SK-N-SH (cell line): ENCODE measurements at regions of chr20 and their contacts with region 1.

Region 1: GRCh38 chr20:64119681-64120341 is 12.4 kb upstream of the NPBWR2 start:
- DNase-seq: peak; percentile 24
- H3K4me3 ChIP-seq: no peak overlapping the region
- H3K27ac ChIP-seq: no peak overlapping the region
- H3K4me1 ChIP-seq: no peaks in the 10 kb centered on the region; a peak in 1 of 4 replicates
- H3K27me3 ChIP-seq: peaks cover 28% of the 10 kb centered on the region
- CTCF ChIP-seq: no peak
- EP300 ChIP-seq: no peak
- RAD21 ChIP-seq: no peak

Region 2: GRCh38 chr20:63963348-63964301 is 156.2 kb before region 1 on chr20:
- CTCF ChIA-PET with region 1: no interaction called
- POLR2A ChIA-PET with region 1: no interaction called
- DNase-seq: no peak
- H3K4me3 ChIP-seq: no peak overlapping the region
- H3K27ac ChIP-seq: no peak overlapping the region
- H3K4me1 ChIP-seq: peaks cover 5 to 7% of the 10 kb centered on the region in 2 experiments; a peak in 2 of 4 replicates
- H3K27me3 ChIP-seq: no peaks in the 10 kb centered on the region
- CTCF ChIP-seq: no peak
- EP300 ChIP-seq: no peak
- RAD21 ChIP-seq: no peak

Region 3: DNA sequence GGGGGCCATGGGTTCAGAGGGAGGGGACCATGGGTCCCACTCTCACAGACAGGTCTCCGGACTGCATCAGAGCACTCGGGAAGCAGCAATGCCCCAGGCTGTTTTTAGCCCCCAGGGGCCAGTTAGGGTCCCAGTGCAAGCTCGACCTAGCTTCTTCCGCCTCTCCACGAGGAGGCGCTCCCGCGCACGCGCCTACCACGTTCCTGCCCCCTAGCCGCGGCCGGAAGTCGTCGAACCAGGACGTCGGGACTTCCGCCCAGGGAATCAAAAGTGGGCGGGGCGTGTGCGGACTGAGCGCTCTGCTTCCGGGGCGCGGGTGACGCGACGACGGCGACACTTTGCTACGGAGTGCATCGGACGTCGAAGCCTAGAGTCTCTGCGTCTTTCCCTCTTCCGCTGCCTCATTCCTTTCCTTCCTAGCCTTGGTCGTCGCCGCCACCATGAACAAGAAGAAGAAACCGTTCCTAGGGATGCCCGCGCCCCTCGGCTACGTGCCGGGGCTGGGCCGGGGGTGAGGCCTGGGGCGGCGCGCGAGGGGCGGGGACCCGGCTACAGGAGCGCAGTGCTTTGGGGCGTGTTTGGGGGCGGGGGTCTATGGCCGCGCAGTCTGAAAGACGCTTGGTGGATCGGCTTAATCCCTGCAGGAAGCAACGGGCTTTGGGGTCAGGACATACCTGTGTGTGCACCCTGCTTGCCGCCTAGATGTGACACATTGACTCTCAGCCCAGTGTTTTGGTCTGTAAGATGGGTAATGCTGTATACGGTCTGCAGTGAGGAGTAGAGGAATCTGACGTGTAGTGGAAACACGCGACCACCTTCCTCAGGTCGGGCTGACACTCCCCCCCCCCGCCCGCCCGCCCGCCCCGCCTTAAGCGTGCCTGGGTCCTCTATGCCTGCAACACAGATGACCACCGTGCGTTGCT is 138.7 kb before region 1 on chr20 and contains the start of gene PRPF6:
- CTCF ChIA-PET with region 1: interaction called, 11 read pairs
- POLR2A ChIA-PET with region 1: no interaction called
- DNase-seq: peak; percentile 98
- H3K4me3 ChIP-seq: peak within 1 kb of the TSS; percentile 77 to 98
- H3K27ac ChIP-seq: peak within 1 kb of the TSS; percentile 89 to 90
- H3K4me1 ChIP-seq: peaks cover 12 to 24% of the 10 kb centered on the region in 2 experiments
- H3K27me3 ChIP-seq: no peaks in the 10 kb centered on the region
- CTCF ChIP-seq: peak; percentile 81
- EP300 ChIP-seq: 0 out of 4 replicates have a peak, but pooled peaks of 1 of the 2 experiments have one; percentile 8
- RAD21 ChIP-seq: no peak; the same call in 1 of the 2 replicates
- polyA plus RNA-seq, gene PRPF6: 50.1 and 59.1 TPM in 2 replicates

Region 4: DNA sequence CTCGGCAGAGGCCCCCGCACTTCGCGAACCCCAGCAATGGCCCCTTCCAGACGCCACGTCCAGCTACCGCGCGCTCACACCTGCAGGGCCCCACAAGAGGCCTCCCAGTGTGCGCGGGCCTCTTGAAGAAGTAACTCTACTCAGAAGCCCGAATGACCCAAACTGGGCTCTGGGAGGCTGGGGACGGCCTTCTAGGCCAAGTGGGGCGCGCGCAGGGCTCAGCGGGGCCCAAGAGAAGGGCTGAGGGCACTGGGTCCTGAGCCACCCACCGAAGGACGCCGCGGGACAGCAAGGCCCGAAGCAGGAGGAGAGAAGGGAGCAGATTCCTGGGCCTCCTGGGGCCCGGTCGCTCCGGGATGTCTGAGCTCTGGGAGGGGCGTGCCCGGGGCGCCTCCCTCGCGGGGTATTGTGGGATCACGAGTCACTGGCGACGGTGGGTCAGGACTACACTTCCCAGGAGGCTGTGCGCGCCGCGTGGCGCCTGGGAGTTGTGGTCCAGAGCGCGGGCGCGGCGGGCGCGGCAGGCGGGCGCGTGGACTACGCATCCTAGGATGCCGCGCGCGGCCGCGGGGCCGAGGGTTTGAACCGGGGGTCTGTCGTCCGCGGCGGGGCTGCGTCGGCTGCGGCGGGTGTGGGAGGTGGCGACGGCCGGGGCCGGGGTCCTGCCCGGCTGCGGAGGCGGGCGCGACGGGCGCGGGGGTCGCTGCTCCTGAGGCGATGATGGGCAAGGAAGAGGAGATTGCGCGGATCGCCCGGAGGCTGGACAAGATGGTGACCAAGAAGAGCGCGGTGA is 57.0 kb before region 1 on chr20 and contains the start of gene TCEA2:
- CTCF ChIA-PET with region 1: interaction called, 12 read pairs
- POLR2A ChIA-PET with region 1: no interaction called
- DNase-seq: peak; percentile 99
- H3K4me3 ChIP-seq: peak within 1 kb of the TSS; percentile 91 to 93
- H3K27ac ChIP-seq: peak within 1 kb of the TSS; percentile 64 to 83
- H3K4me1 ChIP-seq: peaks cover 14 to 17% of the 10 kb centered on the region in 2 experiments; a peak in 2 of 4 replicates
- H3K27me3 ChIP-seq: no peaks in the 10 kb centered on the region
- CTCF ChIP-seq: no peak
- EP300 ChIP-seq: no peak; a peak in 1 of 4 replicates
- RAD21 ChIP-seq: no peak
- polyA plus RNA-seq, gene TCEA2: 53.5 and 98.9 TPM in 2 replicates

Region 5: DNA sequence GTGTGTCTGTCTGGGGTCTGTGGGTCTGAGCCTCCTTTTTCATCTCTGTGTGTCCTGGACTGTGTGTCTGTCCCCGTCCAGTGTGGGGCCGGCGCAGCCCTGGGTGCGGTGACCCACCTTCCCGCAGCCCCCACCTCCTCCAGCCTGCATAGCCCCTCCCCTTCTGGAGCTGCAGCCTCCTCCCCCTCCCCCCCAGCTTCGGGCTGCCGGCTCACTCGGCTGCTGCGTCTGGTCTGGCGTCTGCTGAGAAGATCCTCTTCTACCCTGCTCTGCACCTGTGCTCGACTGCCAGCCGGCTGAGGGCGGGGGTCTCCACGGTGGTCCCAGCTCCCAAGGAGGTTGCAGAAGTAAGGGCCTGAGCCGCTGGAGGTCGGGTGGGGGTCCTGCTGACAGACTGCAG is 28.0 kb before region 1 on chr20:
- CTCF ChIA-PET with region 1: interaction called, 252 read pairs
- POLR2A ChIA-PET with region 1: no interaction called
- DNase-seq: peak; percentile 79
- H3K4me3 ChIP-seq: no peak overlapping the region
- H3K27ac ChIP-seq: 0 out of 4 replicates have a peak overlapping the region, but pooled peaks of 1 of the 2 experiments have one; percentile 8
- H3K4me1 ChIP-seq: peaks cover 0 to 28% of the 10 kb centered on the region in 2 experiments; a peak in 1 of 4 replicates
- H3K27me3 ChIP-seq: no peaks in the 10 kb centered on the region
- CTCF ChIP-seq: no peak
- EP300 ChIP-seq: no peak
- RAD21 ChIP-seq: no peak

Region 6: DNA sequence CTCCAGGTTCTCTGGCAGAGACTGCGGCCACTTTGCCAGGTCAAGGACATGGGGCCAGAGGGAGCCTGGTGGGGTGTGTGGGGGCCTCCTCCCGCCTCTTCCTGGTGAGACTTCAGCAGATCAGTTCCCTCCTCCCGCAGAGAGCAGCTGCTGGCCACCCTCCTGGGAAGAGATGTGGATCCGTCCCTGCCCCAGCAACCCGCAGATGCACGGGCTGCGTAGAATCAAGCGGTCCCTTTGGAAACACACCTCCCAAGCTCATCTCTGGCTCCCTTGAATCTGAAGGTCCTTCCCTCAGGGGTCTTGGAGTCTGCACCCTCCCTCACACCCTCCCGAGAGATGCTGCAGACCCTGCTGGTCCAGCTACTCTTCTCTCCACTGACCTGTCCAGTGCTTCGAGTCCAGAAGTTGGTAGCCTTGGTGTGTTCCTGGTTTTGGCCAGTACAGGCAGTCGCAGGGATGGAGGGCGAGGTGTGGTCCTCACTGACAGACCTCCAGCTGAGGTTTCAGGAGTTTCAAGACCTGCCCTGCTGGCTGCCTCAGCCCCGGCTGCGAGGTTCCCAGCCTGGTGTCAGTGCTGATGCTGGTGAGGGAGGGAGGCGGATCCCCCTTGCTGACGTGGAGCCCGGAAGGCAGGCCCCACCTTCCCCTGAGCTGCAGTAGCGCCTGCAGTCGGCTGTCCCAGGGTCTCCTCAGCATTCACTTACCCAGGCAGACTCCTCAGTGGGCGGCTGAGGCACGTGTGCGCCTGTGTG is 12.7 kb before region 1 on chr20 and contains the start of gene NPBWR2:
- CTCF ChIA-PET with region 1: interaction called, 32 read pairs
- POLR2A ChIA-PET with region 1: no interaction called
- DNase-seq: no peak
- H3K4me3 ChIP-seq: no peak within 1 kb of the TSS
- H3K27ac ChIP-seq: no peak within 1 kb of the TSS
- H3K4me1 ChIP-seq: peaks cover 0 to 18% of the 10 kb centered on the region in 2 experiments; a peak in 1 of 4 replicates
- H3K27me3 ChIP-seq: no peaks in the 10 kb centered on the region; the same call in 1 of the 2 replicates
- CTCF ChIP-seq: no peak
- EP300 ChIP-seq: no peak
- RAD21 ChIP-seq: no peak
- polyA plus RNA-seq, gene NPBWR2: not detected in 2 replicates

Region 7: GRCh38 chr20:64268180-64268579 is 148.4 kb after region 1 on chr20:
- CTCF ChIA-PET with region 1: no interaction called
- POLR2A ChIA-PET with region 1: no interaction called
- DNase-seq: no peak
- H3K4me3 ChIP-seq: no peak overlapping the region
- H3K27ac ChIP-seq: no peak overlapping the region
- H3K4me1 ChIP-seq: no peaks in the 10 kb centered on the region; a peak in 2 of 4 replicates
- H3K27me3 ChIP-seq: no peaks in the 10 kb centered on the region
- CTCF ChIP-seq: no peak
- EP300 ChIP-seq: no peak
- RAD21 ChIP-seq: no peak